Activated CD8-positive, alpha-beta T cell treated with anti-CD3 and anti-CD28 coated beads for 36 hours (primary cell): ENCODE measurements at regions of chr17 and their contacts with region 1.

Region 1: GRCh38 chr17:43483674-43484372 is at the start of gene DHX8:
- DNase-seq: peak; percentile 99
- ATAC-seq: peak; percentile 98
- H3K4me3 Mint-ChIP-seq: peak within 1 kb of the TSS; percentile 100
- H3K27ac Mint-ChIP-seq: peak within 1 kb of the TSS; percentile 98
- H3K4me1 Mint-ChIP-seq: peaks cover 30% of the 10 kb centered on the region
- H3K27me3 Mint-ChIP-seq: no peaks in the 10 kb centered on the region
- CTCF ChIP-seq: peak; percentile 99
- total RNA-seq, gene DHX8: 43.0 to 45.1 TPM

Region 2: DNA sequence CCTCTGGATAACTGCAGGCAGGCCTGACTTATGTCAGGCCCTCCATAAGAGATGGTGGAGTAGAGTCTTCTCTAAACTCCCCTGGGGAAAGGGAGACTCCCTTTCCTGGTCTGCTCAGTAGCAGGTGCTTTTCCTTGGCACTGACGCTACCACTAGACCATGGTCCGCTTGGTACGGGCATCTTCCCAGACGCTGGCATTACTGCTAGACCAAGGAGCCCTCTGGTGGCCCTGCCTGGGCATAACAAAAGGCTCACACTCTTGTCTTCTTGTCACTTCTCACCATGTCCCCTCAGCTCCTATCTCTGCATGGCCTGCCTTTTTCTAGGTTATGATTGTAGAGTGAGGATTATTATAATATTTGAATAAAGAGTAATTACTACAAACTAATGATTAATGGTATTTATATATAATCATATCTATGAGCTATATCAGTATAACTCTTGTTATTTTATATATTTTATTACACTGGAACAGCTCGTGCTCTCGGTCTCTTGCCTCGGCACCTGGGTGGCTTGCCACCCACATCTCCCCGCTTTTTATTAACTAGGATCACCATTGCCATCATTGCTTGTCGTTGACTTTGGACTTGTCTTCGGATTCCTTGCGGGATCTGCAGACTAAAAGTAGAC is 144.8 kb before region 1 on chr17:
- CTCF ChIA-PET with region 1: interaction called, 14 read pairs
- POLR2A ChIA-PET with region 1: interaction called, 3 read pairs
- intact Hi-C with region 1: no loop called
- DNase-seq: peak; percentile 83
- ATAC-seq: no peak
- H3K4me3 Mint-ChIP-seq: no peak overlapping the region
- H3K27ac Mint-ChIP-seq: no peak overlapping the region
- H3K4me1 Mint-ChIP-seq: peaks cover 41% of the 10 kb centered on the region
- H3K27me3 Mint-ChIP-seq: no peaks in the 10 kb centered on the region
- CTCF ChIP-seq: peak; percentile 88

Region 3: DNA sequence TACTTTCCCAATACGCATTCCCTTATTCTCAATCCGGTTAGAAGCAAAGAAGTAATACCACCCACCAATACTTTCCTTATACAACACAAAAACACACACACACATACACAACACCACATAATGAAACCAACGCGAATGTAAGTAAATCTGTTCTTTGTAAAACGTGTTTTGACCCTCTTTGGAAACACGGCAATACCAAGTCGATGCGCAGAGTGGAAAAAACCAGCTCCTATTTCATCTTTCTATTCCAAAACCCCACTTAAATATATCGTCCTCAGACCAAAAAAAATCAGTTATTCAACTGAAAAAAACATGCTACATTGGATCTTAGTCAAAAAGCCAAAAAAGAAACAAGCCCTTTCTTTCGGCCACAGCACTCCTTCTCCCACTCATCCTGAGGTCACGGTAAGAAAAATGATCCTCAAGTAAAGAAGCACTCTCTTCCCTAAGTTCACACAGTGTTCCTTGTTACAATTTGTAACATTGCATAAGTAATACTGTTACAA is 116.0 kb before region 1 on chr17:
- CTCF ChIA-PET with region 1: interaction called, 34 read pairs
- POLR2A ChIA-PET with region 1: interaction called, 50 read pairs
- intact Hi-C with region 1: no loop called
- DNase-seq: peak; percentile 68
- ATAC-seq: peak; percentile 64
- H3K4me3 Mint-ChIP-seq: peak overlapping the region; percentile 97
- H3K27ac Mint-ChIP-seq: peak overlapping the region; percentile 100
- H3K4me1 Mint-ChIP-seq: peaks cover 47% of the 10 kb centered on the region
- H3K27me3 Mint-ChIP-seq: no peaks in the 10 kb centered on the region
- CTCF ChIP-seq: no peak

Region 4: GRCh38 chr17:43388359-43389045 is 95.3 kb before region 1 on chr17:
- CTCF ChIA-PET with region 1: interaction called, 338 read pairs
- POLR2A ChIA-PET with region 1: interaction called, 54 read pairs
- intact Hi-C with region 1: no loop called
- DNase-seq: peak; percentile 94
- ATAC-seq: peak; percentile 76
- H3K4me3 Mint-ChIP-seq: peak overlapping the region; percentile 82
- H3K27ac Mint-ChIP-seq: peak overlapping the region; percentile 99
- H3K4me1 Mint-ChIP-seq: peaks cover 5% of the 10 kb centered on the region
- H3K27me3 Mint-ChIP-seq: no peaks in the 10 kb centered on the region
- CTCF ChIP-seq: no peak

Region 5: DNA sequence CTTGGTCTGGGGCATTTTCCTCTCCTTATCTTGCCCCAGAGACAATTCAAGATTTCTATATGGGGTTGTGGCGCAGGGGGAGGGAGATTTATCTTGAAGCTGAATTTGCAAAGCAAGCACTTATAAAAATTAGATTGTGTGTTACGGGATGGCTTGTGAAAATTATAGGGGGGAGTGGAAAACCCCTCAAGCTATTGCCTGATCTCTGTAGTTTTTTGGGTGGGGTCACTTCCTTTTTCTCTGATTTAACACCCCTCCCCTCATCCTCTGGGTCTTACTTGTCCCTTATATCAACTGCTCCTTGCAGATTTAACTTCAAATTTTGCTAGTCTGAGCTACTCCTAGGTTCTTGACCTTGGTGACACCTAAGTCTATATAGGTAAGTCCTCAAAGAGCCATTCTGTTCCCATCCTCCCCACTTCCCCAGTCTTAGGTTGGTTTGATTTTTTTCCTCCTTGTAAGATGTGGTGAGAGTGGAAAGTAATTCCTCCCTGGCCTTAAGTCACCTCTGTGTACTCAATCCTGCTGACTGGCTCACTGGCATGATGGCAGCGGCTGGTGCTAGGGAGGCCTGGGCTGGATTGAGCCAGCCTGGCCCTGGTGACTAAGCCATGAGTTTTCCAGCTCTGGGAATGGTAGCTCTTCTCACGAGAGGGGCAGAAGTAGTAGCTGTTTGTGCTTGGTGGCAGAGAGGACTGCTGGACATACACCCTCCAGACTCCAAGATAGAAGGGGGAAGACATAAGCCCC is 82.7 kb before region 1 on chr17:
- CTCF ChIA-PET with region 1: interaction called, 338 read pairs
- POLR2A ChIA-PET with region 1: interaction called, 54 read pairs
- intact Hi-C with region 1: no loop called
- DNase-seq: no peak
- ATAC-seq: no peak
- H3K4me3 Mint-ChIP-seq: no peak overlapping the region
- H3K27ac Mint-ChIP-seq: no peak overlapping the region
- H3K4me1 Mint-ChIP-seq: peaks cover 19% of the 10 kb centered on the region
- H3K27me3 Mint-ChIP-seq: no peaks in the 10 kb centered on the region
- CTCF ChIP-seq: no peak

Region 6: DNA sequence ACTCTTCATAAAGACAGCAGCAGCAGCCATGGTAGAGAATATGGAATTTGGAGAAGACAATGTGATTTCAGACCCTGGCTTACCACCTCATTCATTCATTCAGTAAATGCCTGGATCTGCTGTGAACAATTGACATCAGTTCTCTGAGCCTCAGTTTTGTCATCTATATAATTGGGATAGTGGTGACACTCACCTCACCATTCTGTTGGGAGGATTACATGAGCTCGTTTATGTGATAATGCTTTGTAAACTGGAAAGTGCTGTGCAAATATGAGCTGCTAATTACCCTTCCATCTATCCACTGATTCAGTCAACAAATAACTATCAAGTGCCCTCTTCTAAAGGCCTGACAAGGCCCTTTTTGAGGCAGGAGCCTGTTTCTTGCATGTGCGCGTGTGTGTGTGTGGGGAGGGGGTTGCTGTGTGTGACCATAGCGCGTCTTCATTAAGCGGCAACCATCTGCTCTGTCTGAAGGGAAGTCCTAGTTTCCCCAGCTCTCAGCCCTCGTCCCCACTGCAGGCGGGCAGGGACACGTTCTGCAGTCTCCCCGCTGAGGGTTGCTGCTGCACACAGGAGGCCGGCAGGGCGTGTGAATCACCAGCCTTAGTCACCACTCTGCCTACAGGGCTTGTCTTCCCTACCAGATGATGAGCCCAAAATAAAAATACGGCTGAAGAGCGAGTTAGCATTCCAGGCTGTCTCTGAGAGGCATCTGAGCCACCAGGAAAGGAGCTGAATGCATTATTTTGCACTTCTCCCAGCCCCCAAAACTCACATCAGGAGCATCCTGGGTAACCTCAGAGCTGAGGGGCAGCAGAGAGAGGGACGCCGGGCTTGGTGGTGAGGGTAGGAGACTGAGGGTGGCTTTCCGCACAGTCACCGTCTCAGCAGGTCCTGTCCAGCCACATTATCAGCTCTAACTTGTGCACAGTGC is 65.1 kb before region 1 on chr17:
- CTCF ChIA-PET with region 1: interaction called, 19 read pairs
- POLR2A ChIA-PET with region 1: interaction called, 3 read pairs
- intact Hi-C with region 1: no loop called
- DNase-seq: peak; percentile 23
- ATAC-seq: peak; percentile 58
- H3K4me3 Mint-ChIP-seq: no peak overlapping the region
- H3K27ac Mint-ChIP-seq: no peak overlapping the region
- H3K4me1 Mint-ChIP-seq: no peaks in the 10 kb centered on the region
- H3K27me3 Mint-ChIP-seq: peaks cover 5% of the 10 kb centered on the region
- CTCF ChIP-seq: no peak

Region 7: DNA sequence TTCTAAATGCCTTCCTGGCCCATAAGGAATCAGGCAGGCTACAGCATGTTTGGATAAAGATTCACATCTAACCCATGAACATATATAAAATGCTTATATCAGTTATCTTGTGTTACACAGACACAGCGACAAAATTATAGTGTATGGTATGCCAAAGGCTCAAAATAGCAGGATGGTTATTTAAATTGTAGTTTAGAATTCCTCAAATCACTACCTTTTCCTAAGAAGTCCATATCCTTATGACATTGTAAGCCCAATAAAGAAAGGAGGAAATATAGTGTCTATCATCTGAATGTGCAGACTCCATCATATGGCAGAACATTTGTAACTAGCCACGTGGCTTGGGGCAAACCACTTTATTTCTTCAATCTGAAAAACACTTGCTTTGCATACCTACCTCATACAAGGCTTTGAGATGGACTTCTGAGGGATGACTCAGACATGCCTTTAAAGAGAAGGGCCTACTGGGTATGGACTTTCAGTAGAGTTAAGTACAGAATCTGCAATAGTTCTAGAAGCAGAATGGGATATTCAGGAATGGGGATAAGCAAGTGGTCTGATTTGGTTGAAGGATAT is 12.2 kb before region 1 on chr17:
- CTCF ChIA-PET with region 1: interaction called, 10 read pairs
- POLR2A ChIA-PET with region 1: interaction called, 3 read pairs
- intact Hi-C with region 1: no loop called
- DNase-seq: no peak
- ATAC-seq: no peak
- H3K4me3 Mint-ChIP-seq: no peak overlapping the region
- H3K27ac Mint-ChIP-seq: no peak overlapping the region
- H3K4me1 Mint-ChIP-seq: no peaks in the 10 kb centered on the region
- H3K27me3 Mint-ChIP-seq: peaks cover 3% of the 10 kb centered on the region
- CTCF ChIP-seq: no peak